Activated naive CD4-positive, alpha-beta T cell treated with anti-CD3 and anti-CD28 coated beads for 36 hours (primary cell): ENCODE measurements at regions of chr4 and their contacts with region 1.

Region 1: GRCh38 chr4:122584519-122584918 is 36.3 kb downstream of the IL21 start:
- DNase-seq: peak; percentile 42
- H3K4me3 Mint-ChIP-seq: peak overlapping the region; percentile 50
- H3K27ac Mint-ChIP-seq: peak overlapping the region; percentile 100
- H3K4me1 Mint-ChIP-seq: peaks cover 65% of the 10 kb centered on the region
- H3K27me3 Mint-ChIP-seq: no peaks in the 10 kb centered on the region

Region 2: GRCh38 chr4:121784975-121785374 is 799.5 kb before region 1 on chr4:
- CTCF ChIA-PET with region 1: no interaction called
- intact Hi-C with region 1: no loop called
- DNase-seq: no peak
- H3K4me3 Mint-ChIP-seq: no peak overlapping the region
- H3K27ac Mint-ChIP-seq: no peak overlapping the region
- H3K4me1 Mint-ChIP-seq: peaks cover 5% of the 10 kb centered on the region
- H3K27me3 Mint-ChIP-seq: peaks cover 33% of the 10 kb centered on the region

Region 3: DNA sequence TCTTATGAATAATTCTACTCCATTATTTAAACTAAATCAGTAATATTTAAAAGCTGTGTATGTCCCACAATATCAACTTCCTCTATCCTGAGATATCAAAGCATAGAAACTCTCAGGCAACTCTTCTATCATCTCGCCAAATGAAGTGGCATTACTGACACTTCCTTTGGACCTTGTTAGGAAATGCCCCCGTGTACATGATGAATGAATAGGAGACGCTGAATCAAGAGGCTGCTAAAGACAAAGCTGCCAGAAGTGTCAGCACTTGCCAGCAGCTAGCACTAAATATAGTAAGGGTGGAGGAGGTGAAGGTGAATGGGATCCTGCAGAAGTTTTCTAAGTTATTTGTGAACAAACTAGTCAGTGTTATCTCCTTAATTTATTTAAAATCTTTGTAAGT is 531.8 kb before region 1 on chr4:
- CTCF ChIA-PET with region 1: no interaction called
- intact Hi-C with region 1: no loop called
- DNase-seq: no peak
- H3K4me3 Mint-ChIP-seq: no peak overlapping the region
- H3K27ac Mint-ChIP-seq: no peak overlapping the region
- H3K4me1 Mint-ChIP-seq: no peaks in the 10 kb centered on the region
- H3K27me3 Mint-ChIP-seq: no peaks in the 10 kb centered on the region

Region 4: GRCh38 chr4:122508083-122508482 is 76.4 kb before region 1 on chr4:
- CTCF ChIA-PET with region 1: no interaction called
- intact Hi-C with region 1: loop called (anchors 1 kb)
- DNase-seq: no peak
- H3K4me3 Mint-ChIP-seq: peak overlapping the region; percentile 53
- H3K27ac Mint-ChIP-seq: peak overlapping the region; percentile 98
- H3K4me1 Mint-ChIP-seq: peaks cover 89% of the 10 kb centered on the region
- H3K27me3 Mint-ChIP-seq: no peaks in the 10 kb centered on the region

Region 5: GRCh38 chr4:122617597-122618593 is 33.4 kb after region 1 on chr4:
- CTCF ChIA-PET with region 1: interaction called, 5 read pairs
- intact Hi-C with region 1: loop called (anchors 1 kb)
- DNase-seq: no peak
- H3K4me3 Mint-ChIP-seq: peak overlapping the region; percentile 88
- H3K27ac Mint-ChIP-seq: peak overlapping the region; percentile 97
- H3K4me1 Mint-ChIP-seq: peaks cover 70% of the 10 kb centered on the region
- H3K27me3 Mint-ChIP-seq: no peaks in the 10 kb centered on the region

Region 6: DNA sequence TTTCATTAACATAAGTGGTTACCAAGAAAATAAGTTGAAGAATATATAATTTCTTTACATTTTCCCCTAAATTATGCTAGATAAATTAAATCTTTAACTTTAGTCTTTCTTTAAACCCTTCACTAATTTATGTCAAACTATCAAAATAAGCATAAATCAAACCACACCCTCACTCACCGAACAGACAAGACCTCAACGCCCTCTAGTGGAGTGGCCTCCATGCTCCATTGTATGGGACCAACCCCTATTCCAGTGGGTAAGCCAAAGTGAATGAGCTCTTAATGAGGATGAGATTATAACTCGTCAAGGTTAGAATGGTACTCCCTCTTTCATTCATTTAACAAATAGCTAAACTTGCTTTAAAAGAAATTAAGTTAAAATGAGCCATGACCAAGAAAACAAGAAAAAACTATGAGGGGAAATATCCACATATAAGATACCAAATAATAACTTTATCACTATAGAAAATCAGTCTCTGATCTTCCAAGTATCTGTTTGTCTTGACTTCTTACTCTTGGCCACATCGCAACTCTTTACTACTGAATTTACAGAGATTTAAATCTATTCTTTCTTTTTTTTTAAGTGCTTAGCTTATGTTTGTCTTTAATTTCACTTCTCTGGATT is 132.4 kb after region 1 on chr4:
- CTCF ChIA-PET with region 1: interaction called, 12 read pairs
- intact Hi-C with region 1: loop called (anchors 1 kb)
- DNase-seq: peak; percentile 94
- H3K4me3 Mint-ChIP-seq: no peak overlapping the region
- H3K27ac Mint-ChIP-seq: peak overlapping the region; percentile 65
- H3K4me1 Mint-ChIP-seq: peaks cover 41% of the 10 kb centered on the region
- H3K27me3 Mint-ChIP-seq: no peaks in the 10 kb centered on the region

Region 7: GRCh38 chr4:123671633-123672404 is 1087.3 kb after region 1 on chr4:
- CTCF ChIA-PET with region 1: no interaction called
- intact Hi-C with region 1: loop called (anchors 5 kb)
- DNase-seq: peak; percentile 55
- H3K4me3 Mint-ChIP-seq: no peak overlapping the region
- H3K27ac Mint-ChIP-seq: no peak overlapping the region
- H3K4me1 Mint-ChIP-seq: peaks cover 17% of the 10 kb centered on the region
- H3K27me3 Mint-ChIP-seq: peaks cover 44% of the 10 kb centered on the region